CD8-positive, alpha-beta T cell (primary cell): ENCODE measurements at regions of chr3 and their contacts with region 1.

Region 1: DNA sequence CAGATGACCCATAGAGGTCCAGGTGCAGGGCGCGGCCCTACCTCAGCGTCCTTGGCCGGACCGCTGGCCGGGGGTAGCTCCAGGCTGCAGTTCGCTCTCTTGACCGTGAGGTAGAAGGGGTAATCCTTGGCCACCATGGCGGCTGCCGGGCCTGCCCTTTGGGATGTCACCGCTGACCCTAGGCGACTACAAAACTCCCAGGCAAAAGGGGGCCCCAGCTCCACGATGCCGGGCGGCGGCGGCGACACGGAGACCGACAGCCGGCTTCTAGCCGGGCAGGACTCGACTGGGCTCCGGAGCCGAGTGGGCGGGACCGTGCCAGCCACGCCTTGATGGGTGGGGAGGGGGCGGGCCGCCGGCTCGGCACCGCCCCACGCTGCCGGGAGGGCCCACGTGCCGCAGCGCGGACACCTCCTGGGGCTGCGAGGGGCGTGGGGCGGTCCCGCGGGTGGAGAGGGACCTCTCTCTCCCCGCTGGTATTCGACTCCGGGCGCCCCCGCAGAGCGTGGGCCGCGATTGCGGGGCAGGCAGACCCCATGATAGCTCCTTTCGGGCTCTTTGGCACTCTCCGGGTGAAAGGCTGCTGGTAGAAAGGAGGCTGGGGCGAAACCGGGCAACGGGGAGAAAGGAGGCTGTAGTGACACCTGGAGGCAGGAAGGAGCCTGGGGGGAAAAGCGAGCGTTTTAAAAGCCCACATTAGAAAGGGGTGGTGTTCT is at the start of gene ARHGEF3:
- DNase-seq: peak; percentile 82 to 96 (median 87)
- ATAC-seq: peak; percentile 82
- H3K4me3 ChIP-seq: peak within 1 kb of the TSS; percentile 98 to 99
- H3K4me3 Mint-ChIP-seq: peak within 1 kb of the TSS; percentile 95
- H3K27ac ChIP-seq: peak within 1 kb of the TSS; percentile 71 to 85
- H3K27ac Mint-ChIP-seq: peak within 1 kb of the TSS; percentile 93
- H3K4me1 ChIP-seq: peaks cover 23% of the 10 kb centered on the region
- H3K4me1 Mint-ChIP-seq: peaks cover 37% of the 10 kb centered on the region
- H3K27me3 ChIP-seq: no peaks in the 10 kb centered on the region
- H3K27me3 Mint-ChIP-seq: no peaks in the 10 kb centered on the region
- CTCF ChIP-seq: peak; percentile 56
- total RNA-seq, gene ARHGEF3: 38.8 to 39.9 TPM

Region 2: DNA sequence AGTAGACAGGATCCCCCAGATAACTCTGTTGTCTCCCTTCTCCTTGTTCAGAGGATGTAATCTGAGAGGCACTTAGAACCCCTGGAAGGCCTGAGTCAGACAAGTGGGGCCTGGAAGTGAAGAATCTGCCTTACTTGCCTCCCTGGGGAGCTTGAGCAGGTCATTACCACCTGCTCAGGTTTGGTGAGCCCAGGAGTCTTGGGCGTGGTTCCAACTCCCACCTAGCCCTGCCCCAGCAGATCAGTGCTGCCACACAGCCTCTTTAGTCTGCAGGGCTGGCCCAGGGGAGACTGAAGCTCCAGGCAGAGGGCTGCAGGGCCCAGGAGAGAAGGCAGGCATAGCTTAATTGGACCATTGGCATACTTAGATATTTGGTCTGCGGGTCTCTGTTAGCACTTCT is 563.5 kb before region 1 on chr3:
- CTCF ChIA-PET with region 1: no interaction called
- POLR2A ChIA-PET with region 1: no interaction called
- intact Hi-C with region 1: no loop called
- DNase-seq: no peak
- ATAC-seq: no peak
- H3K4me3 ChIP-seq: no peak overlapping the region
- H3K4me3 Mint-ChIP-seq: no peak overlapping the region
- H3K27ac ChIP-seq: no peak overlapping the region
- H3K27ac Mint-ChIP-seq: no peak overlapping the region
- H3K4me1 ChIP-seq: no peaks in the 10 kb centered on the region
- H3K4me1 Mint-ChIP-seq: no peaks in the 10 kb centered on the region
- H3K27me3 ChIP-seq: no peaks in the 10 kb centered on the region
- H3K27me3 Mint-ChIP-seq: peaks cover 2% of the 10 kb centered on the region
- CTCF ChIP-seq: no peak

Region 3: DNA sequence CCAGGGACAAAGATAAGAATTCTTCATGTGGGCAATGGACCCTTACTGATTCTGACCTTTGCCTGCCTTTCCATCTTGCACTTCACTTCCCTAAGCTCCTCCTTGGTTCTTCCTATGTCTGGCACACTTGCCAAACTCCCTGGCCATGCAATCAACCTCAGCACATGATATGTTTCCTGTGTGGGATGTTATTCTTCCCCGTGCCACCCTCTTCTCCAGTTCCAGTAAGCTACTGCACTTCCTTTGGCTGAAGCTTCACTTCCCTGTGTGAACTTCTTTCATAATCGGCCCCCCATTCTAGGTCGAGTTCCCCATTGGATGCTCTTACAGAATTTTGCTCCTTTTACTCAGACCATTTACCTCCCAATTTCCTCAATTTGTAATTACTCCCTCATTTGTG is 108.1 kb before region 1 on chr3:
- CTCF ChIA-PET with region 1: interaction called, 41 read pairs
- POLR2A ChIA-PET with region 1: interaction called, 7 read pairs
- intact Hi-C with region 1: no loop called
- DNase-seq: peak in 1 of 9 experiments; percentile 38
- ATAC-seq: no peak
- H3K4me3 ChIP-seq: no peak overlapping the region
- H3K4me3 Mint-ChIP-seq: peak overlapping the region; percentile 80
- H3K27ac ChIP-seq: peak overlapping the region in 1 of 2 experiments; percentile 60
- H3K27ac Mint-ChIP-seq: peak overlapping the region; percentile 89
- H3K4me1 ChIP-seq: peaks cover 35% of the 10 kb centered on the region
- H3K4me1 Mint-ChIP-seq: peaks cover 46% of the 10 kb centered on the region
- H3K27me3 ChIP-seq: no peaks in the 10 kb centered on the region
- H3K27me3 Mint-ChIP-seq: no peaks in the 10 kb centered on the region
- CTCF ChIP-seq: no peak

Region 4: DNA sequence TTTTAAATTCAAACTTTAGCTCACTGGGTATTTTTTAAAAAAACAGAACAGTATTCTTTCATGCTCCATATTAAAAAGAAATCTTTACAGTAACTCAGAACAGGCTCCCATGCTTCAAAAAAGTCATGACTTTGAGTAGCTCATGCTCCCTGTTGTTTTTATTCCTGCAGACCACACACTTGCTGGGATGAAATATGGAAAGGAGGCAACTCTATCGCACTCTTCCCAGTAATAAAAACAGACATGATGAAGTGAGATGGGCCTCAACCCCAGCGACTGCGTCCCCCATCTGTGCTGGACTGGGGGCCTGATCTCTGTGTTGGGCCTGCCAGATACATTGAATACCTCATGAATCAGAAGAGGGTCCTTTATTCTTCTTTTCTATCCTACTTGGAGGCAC is 58.9 kb before region 1 on chr3:
- CTCF ChIA-PET with region 1: interaction called, 146 read pairs
- POLR2A ChIA-PET with region 1: interaction called, 14 read pairs
- intact Hi-C with region 1: no loop called
- DNase-seq: no peak
- ATAC-seq: no peak
- H3K4me3 ChIP-seq: no peak overlapping the region
- H3K4me3 Mint-ChIP-seq: no peak overlapping the region
- H3K27ac ChIP-seq: peak overlapping the region in 1 of 2 experiments; percentile 24
- H3K27ac Mint-ChIP-seq: peak overlapping the region; percentile 79
- H3K4me1 ChIP-seq: peaks cover 12% of the 10 kb centered on the region
- H3K4me1 Mint-ChIP-seq: peaks cover 46% of the 10 kb centered on the region
- H3K27me3 ChIP-seq: no peaks in the 10 kb centered on the region
- H3K27me3 Mint-ChIP-seq: no peaks in the 10 kb centered on the region
- CTCF ChIP-seq: no peak

Region 5: GRCh38 chr3:56775838-56776555 is 25.8 kb before region 1 on chr3:
- CTCF ChIA-PET with region 1: interaction called, 117 read pairs
- POLR2A ChIA-PET with region 1: interaction called, 182 read pairs
- intact Hi-C with region 1: no loop called
- DNase-seq: no peak
- ATAC-seq: no peak
- H3K4me3 ChIP-seq: no peak overlapping the region
- H3K4me3 Mint-ChIP-seq: peak overlapping the region; percentile 48
- H3K27ac ChIP-seq: peak overlapping the region in 1 of 2 experiments; percentile 48
- H3K27ac Mint-ChIP-seq: peak overlapping the region; percentile 88
- H3K4me1 ChIP-seq: peaks cover 85% of the 10 kb centered on the region
- H3K4me1 Mint-ChIP-seq: peaks cover 91% of the 10 kb centered on the region
- H3K27me3 ChIP-seq: no peaks in the 10 kb centered on the region
- H3K27me3 Mint-ChIP-seq: no peaks in the 10 kb centered on the region
- CTCF ChIP-seq: no peak

Region 6: DNA sequence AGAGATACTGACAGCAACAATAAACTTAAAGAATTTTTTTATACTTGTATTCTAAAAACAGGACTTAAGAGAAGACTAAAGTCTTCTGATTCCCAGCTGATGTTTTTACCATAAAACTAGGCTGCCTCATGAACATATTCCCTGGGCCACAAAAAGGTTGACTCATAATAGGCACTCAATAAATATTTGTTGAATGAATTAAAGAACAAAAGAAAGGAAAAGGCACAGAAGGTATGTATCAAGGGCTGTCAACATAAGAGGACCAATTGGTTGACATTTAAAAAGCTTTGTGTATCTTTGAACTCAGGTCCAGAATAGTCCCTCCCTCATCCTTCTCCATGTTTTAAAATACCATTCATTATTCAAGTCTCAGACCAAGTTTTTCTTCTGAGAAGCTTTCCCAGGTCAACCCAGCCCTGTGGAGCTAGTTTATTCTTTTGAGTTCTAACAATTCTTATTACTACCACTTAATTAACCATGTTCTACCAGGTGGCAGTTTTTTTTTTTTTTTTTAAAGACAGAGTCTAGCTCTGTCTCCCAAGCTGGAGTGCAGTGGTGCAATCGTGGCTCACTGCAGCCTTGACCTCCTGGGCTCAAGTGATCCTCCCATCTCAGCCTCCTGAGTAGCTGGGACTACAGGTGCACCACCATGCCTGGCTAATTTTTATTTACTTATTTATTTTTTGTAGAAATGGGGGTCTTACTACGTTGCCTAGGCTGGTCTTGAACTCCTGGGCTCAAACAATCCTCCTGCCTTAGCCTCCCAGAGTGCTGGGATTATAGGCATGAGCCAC is 17.4 kb after region 1 on chr3:
- CTCF ChIA-PET with region 1: interaction called, 50 read pairs
- POLR2A ChIA-PET with region 1: interaction called, 8 read pairs
- intact Hi-C with region 1: no loop called
- DNase-seq: no peak
- ATAC-seq: no peak
- H3K4me3 ChIP-seq: no peak overlapping the region
- H3K4me3 Mint-ChIP-seq: no peak overlapping the region
- H3K27ac ChIP-seq: no peak overlapping the region
- H3K27ac Mint-ChIP-seq: no peak overlapping the region
- H3K4me1 ChIP-seq: peaks cover 15% of the 10 kb centered on the region
- H3K4me1 Mint-ChIP-seq: peaks cover 59% of the 10 kb centered on the region
- H3K27me3 ChIP-seq: no peaks in the 10 kb centered on the region
- H3K27me3 Mint-ChIP-seq: no peaks in the 10 kb centered on the region
- CTCF ChIP-seq: no peak

Region 7: DNA sequence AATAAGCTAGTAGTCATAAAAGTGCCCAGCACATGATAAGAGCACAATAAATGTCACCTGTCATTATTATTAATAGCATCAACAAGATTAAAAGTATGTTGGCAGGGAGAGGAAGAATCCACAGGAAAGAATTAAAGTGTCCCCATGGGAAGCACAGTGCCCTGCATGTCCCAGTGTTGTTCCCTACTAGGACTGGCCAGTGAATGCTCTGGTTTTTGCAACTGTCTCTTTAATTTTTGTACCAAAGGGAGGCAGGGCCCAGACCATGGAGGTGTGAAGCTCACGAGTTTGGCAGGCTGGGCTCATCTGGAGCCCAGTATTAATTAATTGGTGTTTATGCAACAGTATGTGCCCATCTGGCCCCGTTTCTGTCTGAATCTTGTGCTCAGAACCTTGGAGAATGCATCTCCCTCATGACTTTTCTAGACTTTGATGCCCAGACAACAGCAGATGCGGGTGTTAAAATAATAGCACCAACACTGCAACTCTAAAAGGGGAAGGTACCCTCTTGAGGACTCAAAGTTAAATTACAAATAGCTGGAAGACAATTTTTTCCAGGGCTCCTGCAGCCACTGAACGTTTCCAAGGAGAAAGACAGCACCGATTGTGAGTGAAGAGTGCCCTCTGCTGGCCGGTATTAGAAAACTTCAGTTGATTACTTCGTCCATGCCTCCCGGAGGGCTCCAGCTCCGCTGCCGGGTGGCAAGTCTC is 186.8 kb after region 1 on chr3:
- CTCF ChIA-PET with region 1: interaction called, 202 read pairs
- POLR2A ChIA-PET with region 1: interaction called, 10 read pairs
- intact Hi-C with region 1: loop called (anchors 1 kb)
- DNase-seq: peak; percentile 21 to 84 (median 76)
- ATAC-seq: peak; percentile 69
- H3K4me3 ChIP-seq: no peak overlapping the region
- H3K4me3 Mint-ChIP-seq: no peak overlapping the region
- H3K27ac ChIP-seq: no peak overlapping the region
- H3K27ac Mint-ChIP-seq: no peak overlapping the region
- H3K4me1 ChIP-seq: peaks cover 11% of the 10 kb centered on the region
- H3K4me1 Mint-ChIP-seq: peaks cover 11% of the 10 kb centered on the region
- H3K27me3 ChIP-seq: peaks cover 0 to 2% of the 10 kb centered on the region in 2 experiments
- H3K27me3 Mint-ChIP-seq: peaks cover 8% of the 10 kb centered on the region
- CTCF ChIP-seq: peak; percentile 90

Region 8: GRCh38 chr3:57112206-57112605 is 310.4 kb after region 1 on chr3:
- CTCF ChIA-PET with region 1: no interaction called
- POLR2A ChIA-PET with region 1: no interaction called
- intact Hi-C with region 1: no loop called
- DNase-seq: no peak
- ATAC-seq: no peak
- H3K4me3 ChIP-seq: no peak overlapping the region
- H3K4me3 Mint-ChIP-seq: no peak overlapping the region
- H3K27ac ChIP-seq: no peak overlapping the region
- H3K27ac Mint-ChIP-seq: no peak overlapping the region
- H3K4me1 ChIP-seq: no peaks in the 10 kb centered on the region
- H3K4me1 Mint-ChIP-seq: no peaks in the 10 kb centered on the region
- H3K27me3 ChIP-seq: no peaks in the 10 kb centered on the region
- H3K27me3 Mint-ChIP-seq: no peaks in the 10 kb centered on the region
- CTCF ChIP-seq: no peak